ENCODE measurements at regions of chr9 and their contacts with region 1.

Region 1: DNA sequence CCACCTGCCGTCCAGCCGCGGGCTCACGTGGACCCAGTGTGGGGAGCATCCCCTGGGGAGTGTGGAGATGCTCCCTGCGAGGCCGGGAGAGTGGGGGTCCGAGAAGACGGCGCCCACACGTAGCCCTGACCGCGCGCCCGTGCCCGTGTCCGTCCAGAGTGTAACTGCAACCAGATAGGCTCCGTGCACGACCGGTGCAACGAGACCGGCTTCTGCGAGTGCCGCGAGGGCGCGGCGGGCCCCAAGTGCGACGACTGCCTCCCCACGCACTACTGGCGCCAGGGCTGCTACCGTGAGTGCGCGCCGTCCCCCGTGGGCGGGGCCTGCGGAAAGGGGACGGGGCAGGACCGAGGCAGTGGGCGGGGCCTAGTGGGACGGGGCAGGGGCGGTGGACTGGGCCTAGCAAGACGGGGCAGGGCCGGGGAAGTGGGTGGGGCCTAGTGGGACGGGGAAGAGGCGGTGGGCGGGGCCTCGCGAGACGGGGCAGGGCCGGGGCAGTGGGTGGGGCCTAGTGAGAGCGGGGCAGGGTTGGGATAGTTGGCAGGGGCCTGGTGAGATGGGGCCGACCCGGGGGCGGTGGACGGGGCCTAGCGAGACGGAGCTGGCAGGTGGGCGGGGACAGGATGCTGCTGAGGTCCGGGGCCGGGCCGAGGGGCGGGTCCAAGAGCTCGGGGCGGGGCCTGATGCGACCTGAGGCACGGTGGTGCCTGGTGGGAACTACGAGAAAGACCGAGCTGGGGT is 79.1 kb downstream of the NTNG2 start:
- DNase-seq: peak; percentile 94

Region 2: GRCh38 chr9:131755541-131756198 is 485.3 kb before region 1 on chr9:
- in situ Hi-C with region 1: loop called (anchors 25 kb)
- DNase-seq: peak; percentile 85